Activated CD4-positive, alpha-beta T cell treated with anti-CD3 and anti-CD28 coated beads, Interleukin-2, amount 10 ng/mL, durations not matched to agents 24 days and 14 days (primary cell): ENCODE measurements at regions of chr20 and their contacts with region 1.

Region 1: GRCh38 chr20:37564388-37565133 is 36.9 kb upstream of the BLCAP start:
- DNase-seq: peak; percentile 85
- H3K4me3 Mint-ChIP-seq: no peak overlapping the region
- H3K27ac Mint-ChIP-seq: no peak overlapping the region
- H3K4me1 Mint-ChIP-seq: peaks cover 2% of the 10 kb centered on the region
- H3K27me3 Mint-ChIP-seq: peaks cover 40% of the 10 kb centered on the region

Region 2: GRCh38 chr20:37417617-37418467 is 146.7 kb before region 1 on chr20:
- intact Hi-C with region 1: no loop called
- DNase-seq: no peak
- H3K4me3 Mint-ChIP-seq: no peak overlapping the region
- H3K27ac Mint-ChIP-seq: no peak overlapping the region
- H3K4me1 Mint-ChIP-seq: peaks cover 2% of the 10 kb centered on the region
- H3K27me3 Mint-ChIP-seq: peaks cover 16% of the 10 kb centered on the region

Region 3: DNA sequence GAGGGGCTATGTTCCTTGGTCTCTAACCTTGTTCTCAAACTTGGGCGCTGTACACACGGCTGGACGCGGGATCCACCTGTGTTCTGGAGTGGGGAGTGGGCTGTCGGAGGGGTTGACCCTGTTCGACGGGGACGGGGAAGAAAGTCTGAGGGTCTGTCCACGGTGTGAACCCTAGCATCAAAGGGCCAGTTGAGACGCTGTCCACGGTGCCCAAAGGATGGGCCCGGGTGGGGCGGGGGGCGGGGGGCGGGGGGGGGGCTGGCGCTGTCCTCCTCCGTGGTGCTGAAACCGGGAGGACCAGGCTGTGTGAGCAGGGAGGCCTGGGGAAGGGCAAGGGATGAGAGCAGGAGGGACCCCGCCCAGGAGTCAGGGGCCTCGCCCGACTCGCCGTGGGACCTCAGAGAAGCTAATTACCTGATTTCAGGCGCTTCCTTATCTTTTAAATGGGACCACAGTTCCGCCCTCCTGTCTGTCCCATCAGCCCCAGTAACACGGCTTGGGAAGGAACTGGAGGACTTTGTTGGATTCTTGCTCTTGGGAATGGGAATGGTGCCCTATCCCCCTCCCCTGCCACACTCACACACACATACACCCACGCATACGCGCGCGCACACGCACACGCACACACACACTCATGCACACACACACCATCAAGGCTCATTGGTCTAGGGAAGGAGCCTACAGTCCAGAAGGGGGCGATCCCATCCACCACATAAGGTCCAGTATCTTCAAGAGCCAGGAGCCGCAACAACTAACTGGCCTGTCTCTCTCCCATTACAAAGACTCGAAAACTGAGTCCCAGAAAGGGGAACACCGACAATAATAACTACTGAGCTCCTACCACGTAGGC is 337.3 kb after region 1 on chr20:
- intact Hi-C with region 1: loop called (anchors 10 kb)
- DNase-seq: no peak
- H3K4me3 Mint-ChIP-seq: peak overlapping the region; percentile 11
- H3K27ac Mint-ChIP-seq: peak overlapping the region; percentile 54
- H3K4me1 Mint-ChIP-seq: peaks cover 10% of the 10 kb centered on the region
- H3K27me3 Mint-ChIP-seq: peaks cover 47% of the 10 kb centered on the region

Region 4: DNA sequence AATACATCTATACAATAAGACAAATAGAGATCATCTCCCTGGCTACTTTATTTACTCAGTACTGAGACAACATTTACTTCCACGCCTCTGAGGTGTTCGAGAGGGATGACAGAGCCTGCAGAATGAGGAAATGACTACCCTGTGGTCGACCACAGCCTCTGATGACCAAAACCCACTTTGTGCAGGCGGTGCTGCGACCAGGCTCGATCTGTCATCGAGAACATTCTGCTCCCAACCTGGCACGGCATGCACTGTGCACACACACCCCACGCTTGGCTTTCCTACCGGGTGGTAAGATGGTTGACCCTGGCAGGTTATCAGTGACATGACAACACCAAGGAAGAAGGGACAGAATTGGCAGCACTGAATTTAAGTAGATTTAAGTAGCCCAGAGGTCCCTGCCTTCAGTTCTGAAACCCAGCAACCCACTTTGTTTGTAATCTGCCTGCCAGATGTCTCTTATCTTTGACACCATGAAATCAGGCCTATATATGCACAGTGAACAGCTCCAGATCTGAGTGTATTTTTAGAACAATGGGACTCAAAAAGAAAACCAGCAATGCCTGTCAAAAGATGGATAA is 426.1 kb after region 1 on chr20:
- intact Hi-C with region 1: loop called (anchors 1 kb)
- DNase-seq: peak; percentile 90
- H3K4me3 Mint-ChIP-seq: peak overlapping the region; percentile 53
- H3K27ac Mint-ChIP-seq: peak overlapping the region; percentile 87
- H3K4me1 Mint-ChIP-seq: peaks cover 24% of the 10 kb centered on the region
- H3K27me3 Mint-ChIP-seq: no peaks in the 10 kb centered on the region

Region 5: DNA sequence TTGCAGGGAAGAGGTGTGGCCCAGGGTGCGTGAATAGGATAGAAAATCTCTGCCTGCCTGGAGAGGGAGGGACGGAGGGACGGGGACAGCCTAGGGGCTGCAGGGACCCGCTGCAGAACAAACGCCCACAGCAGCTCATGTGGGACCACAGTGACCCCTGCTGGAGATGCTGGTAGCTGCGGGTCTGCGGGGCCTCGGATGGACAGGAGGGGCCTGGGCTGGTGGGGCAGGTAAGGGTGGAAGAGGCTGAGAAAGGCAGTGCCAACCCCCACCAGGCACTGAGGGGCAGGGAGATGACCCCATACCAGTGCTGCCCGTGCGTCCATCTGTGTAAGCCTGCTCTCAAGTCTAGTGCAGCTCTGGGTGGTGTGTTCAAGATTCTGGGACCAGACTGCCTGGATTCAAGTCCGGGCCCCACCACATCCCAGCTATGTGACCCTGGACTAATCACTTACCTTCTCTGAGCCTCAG is 656.6 kb after region 1 on chr20:
- intact Hi-C with region 1: loop called (anchors 5 kb)
- DNase-seq: peak; percentile 92
- H3K4me3 Mint-ChIP-seq: no peak overlapping the region
- H3K27ac Mint-ChIP-seq: no peak overlapping the region
- H3K4me1 Mint-ChIP-seq: no peaks in the 10 kb centered on the region
- H3K27me3 Mint-ChIP-seq: no peaks in the 10 kb centered on the region